Panc1 (cell line): ENCODE measurements at regions of chr12 and their contacts with region 1.

Region 1: GRCh38 chr12:26921886-26922285 is 15.9 kb downstream of the INTS13 start:
- DNase-seq: no peak
- ATAC-seq: no peak
- H3K4me3 ChIP-seq: no peak overlapping the region
- H3K27ac ChIP-seq: no peak overlapping the region
- H3K4me1 ChIP-seq: no peaks in the 10 kb centered on the region
- H3K27me3 ChIP-seq: no peaks in the 10 kb centered on the region
- CTCF ChIP-seq: no peak

Region 2: GRCh38 chr12:26853303-26854030 is 68.4 kb before region 1 on chr12:
- CTCF ChIA-PET with region 1: no interaction called
- POLR2A ChIA-PET with region 1: no interaction called
- in situ Hi-C with region 1: no loop called
- intact Hi-C with region 1: loop called (anchors 10 kb)
- DNase-seq: no peak
- ATAC-seq: peak; percentile 95
- H3K4me3 ChIP-seq: 0 out of 4 replicates have a peak overlapping the region, but pooled peaks of 1 of the 2 experiments have one; percentile 12
- H3K27ac ChIP-seq: no peak overlapping the region
- H3K4me1 ChIP-seq: peaks cover 3% of the 10 kb centered on the region; the same call in 1 of the 2 replicates
- H3K27me3 ChIP-seq: no peaks in the 10 kb centered on the region; the same call in 1 of the 2 replicates
- CTCF ChIP-seq: peak; percentile 97